HCT116 (cell line): ENCODE measurements at regions of chrX and their contacts with region 1.

Region 1: DNA sequence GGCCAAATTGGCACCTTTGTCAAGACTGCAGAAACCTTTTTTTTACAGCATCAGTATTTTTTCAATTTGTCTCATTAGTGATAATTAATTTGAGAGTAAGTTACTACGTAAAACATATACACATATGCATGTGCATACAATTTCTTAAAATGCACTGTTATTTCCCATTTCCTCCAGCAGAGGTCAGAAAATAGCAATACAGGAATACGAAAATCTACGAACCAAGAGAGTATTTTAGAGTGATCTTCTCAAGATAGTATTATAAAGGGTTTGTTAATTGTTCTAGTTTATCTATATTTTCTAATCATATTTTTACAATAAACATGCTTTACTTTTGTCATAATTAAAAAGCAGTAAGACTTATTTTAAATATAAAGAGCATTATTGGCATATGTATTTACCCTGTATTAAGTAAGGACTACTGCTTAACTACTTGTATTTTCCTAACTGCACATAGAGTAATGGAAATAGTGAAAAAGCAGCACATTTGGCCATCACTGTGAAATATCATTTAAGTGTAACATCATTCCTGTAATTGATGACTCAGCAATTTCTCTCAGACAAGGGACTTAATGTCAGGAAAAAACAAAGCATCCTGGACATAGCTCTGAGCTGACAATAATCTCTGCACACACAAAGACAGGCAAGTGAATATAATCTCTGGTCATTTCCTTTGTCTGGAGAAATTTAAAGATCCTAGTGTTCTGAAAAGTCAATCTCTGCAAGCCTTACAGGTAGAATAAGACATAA is 45.6 kb downstream of the MAOB start:
- DNase-seq: peak; percentile 7
- ATAC-seq: no peak
- H3K4me3 ChIP-seq: no peak overlapping the region
- H3K27ac ChIP-seq: no peak overlapping the region
- H3K4me1 ChIP-seq: no peaks in the 10 kb centered on the region
- H3K27me3 ChIP-seq: no peaks in the 10 kb centered on the region
- CTCF ChIP-seq: peak; percentile 37 to 54 (median 53); a peak in 5 of 6 replicates
- POLR2A ChIP-seq: no peak
- RAD21 ChIP-seq: peak; percentile 59

Region 2: DNA sequence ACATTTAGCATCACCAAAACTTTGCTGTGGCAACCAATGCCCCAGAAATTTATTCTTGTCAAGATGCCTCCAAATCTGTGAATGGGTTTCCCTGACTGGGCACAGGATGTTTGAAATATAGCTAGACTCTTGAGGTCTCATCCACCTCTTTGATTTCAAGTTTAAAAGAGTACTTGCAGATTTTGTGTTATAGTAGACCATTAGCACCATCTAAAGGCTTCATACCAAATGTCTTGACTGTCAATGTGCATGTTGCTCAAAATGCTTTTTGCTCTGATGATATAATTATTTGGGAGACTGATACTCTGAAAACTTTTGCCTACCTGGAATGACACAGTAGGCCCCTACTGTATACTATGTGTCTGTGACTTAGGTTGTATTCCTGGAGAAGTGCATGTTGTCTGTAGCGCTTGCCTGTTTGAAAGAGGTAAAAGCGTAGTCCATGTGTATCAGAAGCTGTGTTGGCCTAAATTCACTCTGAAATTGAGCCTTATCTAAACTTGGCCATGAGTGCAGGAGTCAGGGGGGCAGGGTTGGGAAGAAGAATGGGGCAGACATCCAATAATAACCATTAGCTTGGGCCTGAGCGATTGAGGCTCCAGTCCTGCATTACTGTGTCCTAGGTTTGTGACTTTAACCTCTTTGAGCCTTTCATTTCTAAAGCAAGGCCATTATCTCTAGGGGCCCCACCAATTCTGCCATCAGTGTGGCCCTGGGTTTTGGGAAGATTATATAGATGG is 102.7 kb after region 1 on chrX:
- CTCF ChIA-PET with region 1: interaction called, 4 read pairs
- POLR2A ChIA-PET with region 1: no interaction called
- RAD21 ChIA-PET with region 1: no interaction called
- intact Hi-C with region 1: loop called (anchors 1 kb)
- DNase-seq: no peak
- ATAC-seq: no peak
- H3K4me3 ChIP-seq: no peak overlapping the region
- H3K27ac ChIP-seq: no peak overlapping the region
- H3K4me1 ChIP-seq: no peaks in the 10 kb centered on the region
- H3K27me3 ChIP-seq: no peaks in the 10 kb centered on the region
- CTCF ChIP-seq: peak in 2 of 3 experiments; percentile 34 to 38; a peak in 3 of 6 replicates
- POLR2A ChIP-seq: no peak
- RAD21 ChIP-seq: peak; percentile 60